ENCODE measurements at regions of chr19 and their contacts with region 1.

Region 1: GRCh38 chr19:5622463-5623396 is at the starts of genes SAFB and SAFB2:
- DNase-seq: peak; percentile 99
- H3K4me3 ChIP-seq: peak within 1 kb of the TSS; percentile 83 to 97 (median 84)
- H3K27ac ChIP-seq: peak within 1 kb of the TSS; percentile 77
- H3K4me1 ChIP-seq: peaks cover 28% of the 10 kb centered on the region
- H3K27me3 ChIP-seq: no peaks in the 10 kb centered on the region
- CTCF ChIP-seq: no peak
- total RNA-seq, gene SAFB: 26.0 to 88.5 TPM
- total RNA-seq, gene SAFB2: 20.2 to 49.1 TPM

Region 2: DNA sequence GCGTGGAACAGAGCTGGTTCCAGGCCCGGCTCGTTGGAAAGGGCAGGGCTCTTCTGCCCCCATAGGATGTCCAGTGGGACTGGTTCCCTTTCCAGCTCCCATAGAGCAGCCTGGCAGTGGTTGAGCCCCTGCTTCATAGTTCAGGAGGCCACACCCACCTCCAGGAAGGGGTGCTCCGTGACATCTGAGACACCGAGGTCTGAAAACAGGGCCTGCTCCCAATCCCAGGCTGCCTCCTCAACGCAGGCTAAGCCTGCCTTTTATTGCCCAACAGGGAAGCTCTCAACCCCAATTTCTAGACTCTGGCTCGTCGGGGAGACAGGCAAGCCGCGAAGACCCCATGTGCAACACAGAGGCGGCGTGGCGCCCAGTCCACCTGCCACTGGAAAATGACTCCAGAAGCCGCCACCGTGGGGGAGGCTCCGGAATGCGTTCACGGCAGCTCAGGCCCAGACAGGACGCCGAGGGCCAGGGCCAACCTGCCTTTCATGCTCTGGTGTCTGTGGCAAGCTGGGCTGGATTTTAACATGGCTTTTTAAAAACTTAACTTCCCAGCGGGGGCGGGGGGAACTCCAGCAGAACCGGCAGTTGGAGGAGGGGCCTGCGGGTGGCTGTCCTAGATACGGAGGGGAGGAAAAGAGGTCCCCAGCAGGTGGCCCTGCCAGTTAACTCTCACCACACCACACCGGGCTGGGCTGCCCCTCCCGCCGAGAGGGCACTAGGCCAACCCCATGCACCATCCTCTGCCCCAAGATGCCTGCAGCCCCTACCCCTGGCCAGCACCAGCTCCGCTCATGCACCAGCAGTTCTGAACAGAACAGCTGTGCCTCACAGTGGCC is 37.0 kb before region 1 on chr19:
- CTCF ChIA-PET with region 1: no interaction called
- dilution Hi-C with region 1: loop called (anchors 5 kb)
- in situ Hi-C with region 1: no loop called
- intact Hi-C with region 1: no loop called
- DNase-seq: no peak
- H3K4me3 ChIP-seq: no peak overlapping the region
- H3K27ac ChIP-seq: no peak overlapping the region
- H3K4me1 ChIP-seq: peaks cover 14% of the 10 kb centered on the region
- H3K27me3 ChIP-seq: no peaks in the 10 kb centered on the region
- CTCF ChIP-seq: no peak

Region 3: DNA sequence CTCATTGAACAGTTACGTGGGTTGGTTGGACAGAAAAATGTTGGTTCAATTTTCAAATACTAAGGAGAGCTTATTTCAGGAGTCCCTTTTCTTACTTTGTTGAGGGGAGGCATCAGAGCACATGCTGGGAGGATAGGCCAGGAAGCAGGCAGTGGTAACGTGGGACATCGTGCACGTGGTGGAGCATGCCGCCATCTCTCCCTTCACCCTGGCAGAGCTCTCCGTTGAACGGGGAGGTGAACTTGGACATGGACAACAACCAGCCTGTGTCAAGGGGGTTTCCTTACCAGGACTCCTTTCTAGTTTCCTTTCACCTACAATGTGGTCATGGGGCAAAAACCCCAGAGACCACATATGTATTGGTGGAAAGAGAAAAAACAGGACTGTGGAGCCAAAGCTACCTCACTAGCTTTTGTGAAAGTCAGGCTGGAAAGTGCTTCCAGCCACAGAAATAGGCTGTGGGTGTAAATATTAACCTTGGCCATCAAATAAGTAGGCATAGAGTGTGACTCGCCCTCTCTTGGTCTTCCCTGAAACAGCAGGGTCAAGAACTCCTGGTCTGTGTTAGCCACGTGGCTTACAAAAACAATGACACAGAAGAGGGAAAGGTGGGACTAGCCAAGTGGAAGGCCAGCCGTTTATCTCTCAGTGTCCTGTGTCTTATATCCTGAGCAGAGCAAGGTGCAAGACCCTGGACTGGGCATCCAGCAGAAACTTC is 43.2 kb after region 1 on chr19:
- CTCF ChIA-PET with region 1: no interaction called
- dilution Hi-C with region 1: loop called (anchors 5 kb)
- in situ Hi-C with region 1: no loop called
- intact Hi-C with region 1: loop called (anchors 5 kb)
- DNase-seq: peak; percentile 48
- H3K4me3 ChIP-seq: no peak overlapping the region
- H3K27ac ChIP-seq: no peak overlapping the region
- H3K4me1 ChIP-seq: no peaks in the 10 kb centered on the region
- H3K27me3 ChIP-seq: no peaks in the 10 kb centered on the region
- CTCF ChIP-seq: peak in 1 of 2 donors; percentile 22

Region 4: DNA sequence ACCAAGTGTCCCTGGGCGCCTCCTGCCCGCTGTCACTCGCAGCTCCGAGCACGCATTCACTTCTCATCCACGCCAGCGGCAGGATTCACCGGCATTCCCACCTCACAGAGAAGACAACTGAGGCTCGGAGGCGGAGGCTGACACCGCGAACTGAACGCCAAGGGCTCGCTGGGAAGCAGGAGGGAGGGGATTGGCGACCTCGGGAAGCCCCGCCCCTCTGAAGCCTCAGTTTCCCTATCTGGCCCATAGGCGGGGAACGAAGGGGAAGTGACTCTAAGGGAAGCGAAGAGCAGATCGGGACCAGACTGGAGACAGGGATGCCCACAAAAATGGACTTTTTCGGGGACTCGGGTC is 57.3 kb after region 1 on chr19:
- CTCF ChIA-PET with region 1: no interaction called
- dilution Hi-C with region 1: no loop called
- in situ Hi-C with region 1: no loop called
- intact Hi-C with region 1: no loop called
- DNase-seq: no peak
- H3K4me3 ChIP-seq: peak overlapping the region; percentile 78 to 88 (median 83)
- H3K27ac ChIP-seq: peak overlapping the region; percentile 55
- H3K4me1 ChIP-seq: peaks cover 5% of the 10 kb centered on the region
- H3K27me3 ChIP-seq: no peaks in the 10 kb centered on the region
- CTCF ChIP-seq: no peak

Region 5: GRCh38 chr19:5690125-5690954 is 67.6 kb after region 1 on chr19 and contains the start of gene RPL36:
- CTCF ChIA-PET with region 1: interaction called, 4 read pairs
- dilution Hi-C with region 1: no loop called
- in situ Hi-C with region 1: no loop called
- intact Hi-C with region 1: loop called (anchors 2 kb)
- DNase-seq: peak; percentile 95
- H3K4me3 ChIP-seq: peak within 1 kb of the TSS; percentile 65 to 97 (median 81)
- H3K27ac ChIP-seq: peak within 1 kb of the TSS; percentile 77
- H3K4me1 ChIP-seq: peaks cover 26% of the 10 kb centered on the region
- H3K27me3 ChIP-seq: no peaks in the 10 kb centered on the region
- CTCF ChIP-seq: peak; percentile 95 to 97
- total RNA-seq, gene RPL36: 323 to 990 TPM

Region 6: DNA sequence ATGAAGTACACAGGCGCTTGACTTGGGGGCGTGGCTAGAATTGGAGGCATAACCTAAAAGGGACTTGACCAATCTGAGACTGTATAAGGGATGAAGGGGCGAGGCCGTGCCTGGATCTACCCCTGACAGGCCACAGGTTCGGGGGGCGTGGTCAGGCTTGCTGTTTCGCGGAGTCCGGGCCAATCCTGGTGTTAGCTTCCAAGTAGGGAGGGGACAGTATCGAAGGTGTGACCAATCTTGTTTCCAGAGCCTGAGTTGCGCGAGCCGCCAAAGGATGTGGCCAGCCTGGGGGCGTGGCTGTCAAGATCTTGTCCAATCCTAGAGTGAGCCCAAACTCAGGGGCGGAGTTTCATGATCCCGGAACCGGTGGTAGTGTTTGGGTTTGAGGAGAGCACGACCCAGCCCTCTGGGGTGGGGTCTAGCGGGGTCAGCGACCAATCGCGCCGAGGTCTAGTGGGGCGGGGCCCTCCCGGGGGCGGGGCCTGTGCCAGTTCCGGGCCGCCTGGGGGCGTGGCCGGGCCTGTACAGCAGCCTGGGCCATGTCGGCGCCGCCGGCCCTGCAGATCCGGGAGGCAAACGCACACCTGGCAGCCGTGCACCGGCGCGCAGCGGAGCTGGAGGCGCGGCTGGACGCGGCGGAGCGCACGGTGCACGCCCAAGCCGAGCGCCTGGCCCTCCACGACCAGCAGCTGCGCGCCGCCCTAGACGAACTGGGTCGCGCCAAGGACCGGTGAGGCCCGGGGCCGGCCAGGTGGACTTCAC is 281.8 kb after region 1 on chr19 and contains the start of gene VMAC:
- CTCF ChIA-PET with region 1: no interaction called
- dilution Hi-C with region 1: no loop called
- in situ Hi-C with region 1: no loop called
- intact Hi-C with region 1: loop called (anchors 5 kb)
- DNase-seq: peak; percentile 100
- H3K4me3 ChIP-seq: peak within 1 kb of the TSS; percentile 70 to 82 (median 78)
- H3K27ac ChIP-seq: peak within 1 kb of the TSS; percentile 90
- H3K4me1 ChIP-seq: peaks cover 4% of the 10 kb centered on the region
- H3K27me3 ChIP-seq: no peaks in the 10 kb centered on the region
- CTCF ChIP-seq: no peak
- total RNA-seq, gene VMAC: 3.4 to 7.3 TPM